CD4-positive, alpha-beta memory T cell (primary cell): ENCODE measurements at regions of chr10 and their contacts with region 1.

Region 1: DNA sequence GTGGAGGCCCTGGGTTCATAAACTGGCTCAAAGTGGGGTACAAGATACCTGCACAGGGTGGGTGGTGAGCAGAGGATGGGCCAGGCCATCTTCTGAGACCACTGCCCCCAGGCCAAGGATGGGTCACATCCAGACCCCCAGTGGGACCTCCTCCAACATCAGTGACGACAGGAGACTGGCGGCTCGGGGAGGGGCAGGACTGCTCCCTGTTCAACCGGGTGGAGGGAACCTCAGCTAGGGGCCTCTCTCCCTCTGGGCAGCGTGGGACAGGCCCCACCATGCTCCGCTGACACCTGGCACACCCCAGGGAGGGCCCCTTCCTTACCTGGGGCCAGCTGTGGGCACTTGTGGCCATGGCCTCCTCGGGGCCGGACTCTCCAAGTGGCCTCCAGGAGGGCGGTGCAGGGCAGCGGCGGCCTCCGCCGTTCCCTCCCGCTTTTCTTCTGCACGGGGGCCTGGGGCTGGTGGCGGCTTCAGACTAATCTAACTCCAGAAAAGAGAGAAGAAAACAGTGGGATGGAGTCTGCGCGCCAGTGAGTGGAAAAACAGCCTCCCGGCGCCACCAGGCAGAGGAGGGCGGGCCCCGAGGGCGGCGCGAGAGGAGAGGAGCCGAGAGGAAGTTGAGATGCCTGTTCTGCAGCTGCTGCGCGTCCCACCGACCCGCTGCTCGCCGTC is at the start of gene CALHM2:
- DNase-seq: peak in 4 of 5 donors; percentile 40 to 57 (median 44)
- H3K4me3 ChIP-seq: peak within 1 kb of the TSS; percentile 79 to 97
- H3K4me3 Mint-ChIP-seq: peak within 1 kb of the TSS; percentile 90 to 99 (median 96)
- H3K27ac ChIP-seq: peak within 1 kb of the TSS; percentile 72
- H3K27ac Mint-ChIP-seq: peak within 1 kb of the TSS; percentile 81 to 98 (median 95)
- H3K4me1 ChIP-seq: peaks cover 54% of the 10 kb centered on the region
- H3K4me1 Mint-ChIP-seq: peaks cover 42 to 74% (median 51%) of the 10 kb centered on the region in 4 donors
- H3K27me3 ChIP-seq: no peaks in the 10 kb centered on the region
- H3K27me3 Mint-ChIP-seq: no peaks in the 10 kb centered on the region
- total RNA-seq, gene CALHM2: 80.5 to 84.6 TPM

Region 2: GRCh38 chr10:103465411-103466179 is 13.6 kb after region 1 on chr10:
- CTCF ChIA-PET with region 1: interaction called, 14 read pairs
- POLR2A ChIA-PET with region 1: interaction called, 106 read pairs
- intact Hi-C with region 1: no loop called
- DNase-seq: no peak
- H3K4me3 ChIP-seq: no peak overlapping the region
- H3K4me3 Mint-ChIP-seq: no peak overlapping the region
- H3K27ac ChIP-seq: no peak overlapping the region
- H3K27ac Mint-ChIP-seq: no peak overlapping the region
- H3K4me1 ChIP-seq: peaks cover 15% of the 10 kb centered on the region
- H3K4me1 Mint-ChIP-seq: peaks cover 14 to 34% (median 25%) of the 10 kb centered on the region in 4 donors
- H3K27me3 ChIP-seq: no peaks in the 10 kb centered on the region
- H3K27me3 Mint-ChIP-seq: no peaks in the 10 kb centered on the region

Region 3: GRCh38 chr10:103470761-103471653 is 19.0 kb after region 1 on chr10:
- CTCF ChIA-PET with region 1: interaction called, 28 read pairs
- POLR2A ChIA-PET with region 1: interaction called, 106 read pairs
- intact Hi-C with region 1: loop called (anchors 1 kb)
- DNase-seq: peak; percentile 67 to 88 (median 74)
- H3K4me3 ChIP-seq: peak overlapping the region in 1 of 2 donors; percentile 3
- H3K4me3 Mint-ChIP-seq: peak overlapping the region; percentile 67 to 85 (median 79)
- H3K27ac ChIP-seq: peak overlapping the region; percentile 63
- H3K27ac Mint-ChIP-seq: peak overlapping the region; percentile 85 to 97 (median 90)
- H3K4me1 ChIP-seq: peaks cover 43% of the 10 kb centered on the region
- H3K4me1 Mint-ChIP-seq: peaks cover 30 to 69% (median 51%) of the 10 kb centered on the region in 4 donors
- H3K27me3 ChIP-seq: no peaks in the 10 kb centered on the region
- H3K27me3 Mint-ChIP-seq: no peaks in the 10 kb centered on the region

Region 4: GRCh38 chr10:103476046-103476995 is 24.4 kb after region 1 on chr10:
- CTCF ChIA-PET with region 1: interaction called, 28 read pairs
- POLR2A ChIA-PET with region 1: interaction called, 106 read pairs
- intact Hi-C with region 1: loop called (anchors 1 kb)
- DNase-seq: no peak
- H3K4me3 ChIP-seq: no peak overlapping the region
- H3K4me3 Mint-ChIP-seq: peak overlapping the region in 1 of 8 donors; percentile 69
- H3K27ac ChIP-seq: no peak overlapping the region
- H3K27ac Mint-ChIP-seq: peak overlapping the region in 3 of 7 donors; percentile 17 to 68 (median 50)
- H3K4me1 ChIP-seq: peaks cover 24% of the 10 kb centered on the region
- H3K4me1 Mint-ChIP-seq: peaks cover 12 to 41% (median 23%) of the 10 kb centered on the region in 4 donors
- H3K27me3 ChIP-seq: no peaks in the 10 kb centered on the region
- H3K27me3 Mint-ChIP-seq: no peaks in the 10 kb centered on the region

Region 5: GRCh38 chr10:103648921-103649532 is 197.1 kb after region 1 on chr10:
- CTCF ChIA-PET with region 1: no interaction called
- POLR2A ChIA-PET with region 1: no interaction called
- intact Hi-C with region 1: no loop called
- DNase-seq: no peak
- H3K4me3 ChIP-seq: no peak overlapping the region
- H3K4me3 Mint-ChIP-seq: no peak overlapping the region
- H3K27ac ChIP-seq: no peak overlapping the region
- H3K27ac Mint-ChIP-seq: no peak overlapping the region
- H3K4me1 ChIP-seq: no peaks in the 10 kb centered on the region
- H3K4me1 Mint-ChIP-seq: peaks cover 0 to 18% (median under 1%) of the 10 kb centered on the region in 4 donors
- H3K27me3 ChIP-seq: no peaks in the 10 kb centered on the region
- H3K27me3 Mint-ChIP-seq: no peaks in the 10 kb centered on the region